Posterior cingulate gyrus (tissue), 11 donors: ENCODE measurements at regions of chr6 and their contacts with region 1.

Region 1: DNA sequence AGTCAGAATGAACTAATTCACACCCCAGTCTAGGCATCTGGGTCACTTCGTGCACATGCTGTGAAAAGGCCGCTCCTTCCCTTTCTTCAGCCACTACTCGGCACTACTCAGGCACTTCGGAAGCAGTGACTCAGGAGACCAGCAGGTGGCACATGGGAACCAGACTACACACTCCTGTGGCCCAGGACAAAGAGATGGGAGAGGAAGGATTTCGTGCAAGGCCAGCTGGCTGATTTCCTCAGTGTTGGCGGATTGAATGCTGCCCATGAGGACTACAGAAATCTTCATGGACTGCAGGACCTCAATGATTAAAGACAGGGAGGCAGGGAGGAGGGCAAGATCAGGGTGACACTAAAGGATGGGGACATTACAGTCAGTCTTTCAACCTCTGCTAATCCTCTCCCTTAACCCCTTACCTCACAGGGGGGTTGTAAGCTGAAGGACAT is 117.8 kb upstream of the SPACA1 start:
- DNase-seq: peak; percentile 70 to 97 (median 82)

Region 2: DNA sequence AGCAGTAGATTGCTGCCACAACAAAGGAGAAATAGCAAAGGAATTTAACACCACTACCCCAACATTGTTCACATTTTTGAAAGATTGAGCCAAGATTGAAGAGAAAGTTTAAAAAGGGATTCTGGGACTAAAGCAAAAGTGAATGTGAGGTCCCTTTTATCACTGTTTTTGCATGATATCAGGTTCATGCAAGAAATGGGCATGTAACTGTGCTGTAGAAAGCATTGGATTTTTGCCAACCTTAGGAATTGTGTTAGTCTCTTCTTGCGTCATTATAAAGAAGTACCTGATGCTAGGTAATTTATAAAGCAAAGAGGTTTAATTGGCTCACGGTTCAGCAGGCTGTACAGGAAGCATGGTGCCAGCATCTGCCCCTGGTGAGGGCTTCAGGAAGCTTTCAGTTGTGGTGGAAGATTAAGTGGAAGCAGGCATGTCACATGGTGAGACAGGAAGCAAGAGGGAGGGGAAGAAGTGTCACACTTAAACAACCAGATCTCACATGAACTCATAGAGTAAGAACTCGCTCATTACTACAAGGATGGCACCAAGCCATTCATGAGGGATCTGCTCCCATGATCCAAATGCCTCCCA is 596.2 kb before region 1 on chr6:
- intact Hi-C with region 1: no loop called
- DNase-seq: no peak

Region 3: DNA sequence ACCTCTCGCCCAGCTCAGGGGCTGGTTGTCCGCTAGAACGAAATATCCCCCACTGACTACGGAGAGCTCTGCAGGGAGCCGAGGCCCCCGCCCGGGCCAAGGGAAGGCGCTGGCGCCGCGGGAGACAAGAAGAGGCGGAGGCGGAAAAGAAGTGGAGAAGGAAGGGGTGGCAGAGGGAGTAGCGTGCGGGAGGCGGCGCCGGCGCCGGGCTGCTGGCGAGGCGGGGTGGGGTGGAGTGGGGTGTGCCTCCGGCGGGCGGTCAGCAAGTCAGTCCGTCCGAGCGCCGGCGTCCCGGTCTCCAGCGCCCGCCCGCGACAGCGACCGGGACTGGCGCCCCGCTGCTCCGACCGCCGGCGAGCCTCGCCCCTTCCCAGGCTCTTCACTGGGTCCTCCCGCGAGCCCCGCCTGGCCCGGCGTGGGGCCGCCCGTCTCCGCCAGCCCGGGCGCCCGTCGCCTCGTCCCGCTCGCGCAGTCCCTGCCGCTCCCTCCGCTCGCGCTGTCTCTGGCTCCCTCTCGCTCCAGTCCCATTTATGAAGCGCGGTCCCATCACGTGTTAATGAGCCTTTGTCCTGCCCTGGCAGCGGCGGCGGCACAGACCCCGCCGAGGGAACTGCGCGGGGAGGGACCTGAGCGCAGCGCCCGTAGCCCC is 236.1 kb after region 1 on chr6 and contains the start of gene CNR1:
- intact Hi-C with region 1: loop called (anchors 10 kb)
- DNase-seq: peak in 8 of 10 donors; percentile 21 to 91 (median 58)

Region 4: GRCh38 chr6:88492824-88493223 is 563.0 kb after region 1 on chr6:
- intact Hi-C with region 1: loop called (anchors 10 kb)
- DNase-seq: no peak

Region 5: DNA sequence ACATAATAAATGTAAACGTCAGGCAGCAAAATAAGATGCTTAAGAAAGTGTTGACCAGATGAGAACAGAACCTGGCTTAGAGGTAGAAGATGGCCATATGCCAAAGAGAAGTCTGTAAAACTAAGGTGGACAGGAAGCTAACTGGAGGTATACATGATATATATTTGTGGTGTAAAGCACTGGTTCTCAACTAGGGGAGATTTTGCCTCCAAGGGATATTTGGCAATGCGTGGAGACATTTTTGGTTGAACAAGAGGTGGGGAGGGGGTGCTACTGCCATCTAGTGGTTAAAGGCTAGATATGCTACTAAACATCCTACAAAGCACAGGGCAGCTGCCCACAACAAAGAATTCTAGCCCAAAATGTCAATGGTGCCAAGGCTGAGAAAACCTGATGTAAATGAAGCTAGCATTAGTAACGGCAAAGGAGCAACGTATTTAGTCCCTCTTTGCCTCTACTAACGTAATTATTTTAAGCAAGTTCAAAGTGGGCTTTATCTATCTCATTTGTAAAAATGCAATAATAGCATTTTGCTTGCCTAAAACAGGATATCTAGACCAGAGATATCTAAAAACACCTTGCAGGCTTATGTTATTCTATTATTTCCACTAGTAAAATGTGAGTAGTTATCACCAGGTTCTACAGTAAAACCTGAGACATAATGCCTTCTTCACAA is 851.0 kb after region 1 on chr6:
- intact Hi-C with region 1: loop called (anchors 10 kb)
- DNase-seq: peak in 4 of 10 donors; percentile 21 to 39 (median 24)